ENCODE measurements at regions of chr17 and their contacts with region 1.

Region 1: DNA sequence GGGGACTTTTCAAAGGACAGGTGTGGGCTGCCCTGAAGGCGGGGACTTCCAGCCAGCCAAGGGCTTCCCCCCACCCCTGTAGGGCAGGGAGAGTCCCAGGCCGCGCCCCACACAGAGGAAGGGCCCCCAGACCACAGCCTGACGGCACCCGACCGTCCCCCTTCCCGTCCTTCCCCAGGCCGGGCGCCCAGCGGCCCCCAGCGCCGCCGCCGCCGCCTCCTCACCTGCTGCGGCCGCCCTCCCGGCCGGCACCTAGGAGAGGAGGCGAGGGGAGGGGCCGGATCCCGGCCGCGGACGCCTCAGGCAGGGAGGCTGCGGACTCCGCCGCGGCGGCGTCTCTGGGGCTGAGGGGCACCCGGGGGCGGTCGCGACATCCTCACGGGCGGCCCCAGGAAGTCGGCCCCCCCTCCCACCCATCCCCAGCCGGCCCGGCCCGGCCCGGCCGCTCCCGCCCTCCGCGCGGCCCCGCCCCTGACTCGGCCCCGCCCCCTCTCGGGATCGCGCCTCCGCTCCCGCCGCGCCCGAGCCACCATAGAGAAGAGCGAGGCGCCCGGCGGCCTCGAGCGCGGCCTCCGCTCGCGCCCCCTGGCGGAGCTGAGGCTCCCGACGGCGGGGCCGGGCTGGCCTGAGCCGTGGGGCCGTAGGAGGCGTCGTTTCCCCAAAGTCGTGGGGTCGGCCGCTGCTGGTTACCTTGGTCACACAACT is 25.5 kb upstream of the RFFL start:
- DNase-seq: peak; percentile 85 to 91
- ATAC-seq: peak; percentile 93 to 98 (median 96)
- H3K4me3 ChIP-seq: peak overlapping the region; percentile 76 to 99 (median 92)
- H3K27ac ChIP-seq: peak overlapping the region; percentile 33 to 95 (median 86)
- H3K4me1 ChIP-seq: peaks cover 0 to 27% (median 11%) of the 10 kb centered on the region in 9 donors
- H3K27me3 ChIP-seq: no peaks in the 10 kb centered on the region
- CTCF ChIP-seq: peak; percentile 72 to 92 (median 84)

Region 2: GRCh38 chr17:34980681-34981537 is 108.1 kb before region 1 on chr17:
- intact Hi-C with region 1: loop called in 2 of 10 experiments (anchors 5 kb)
- DNase-seq: peak; percentile 68 to 78
- ATAC-seq: peak; percentile 88 to 96 (median 94)
- H3K4me3 ChIP-seq: peak overlapping the region; percentile 94 to 99 (median 96)
- H3K27ac ChIP-seq: peak overlapping the region; percentile 98 to 100 (median 99)
- H3K4me1 ChIP-seq: peaks cover 0 to 33% (median 25%) of the 10 kb centered on the region in 9 donors
- H3K27me3 ChIP-seq: no peaks in the 10 kb centered on the region
- CTCF ChIP-seq: peak in 7 of 9 donors; percentile 12 to 64 (median 50)

Region 3: DNA sequence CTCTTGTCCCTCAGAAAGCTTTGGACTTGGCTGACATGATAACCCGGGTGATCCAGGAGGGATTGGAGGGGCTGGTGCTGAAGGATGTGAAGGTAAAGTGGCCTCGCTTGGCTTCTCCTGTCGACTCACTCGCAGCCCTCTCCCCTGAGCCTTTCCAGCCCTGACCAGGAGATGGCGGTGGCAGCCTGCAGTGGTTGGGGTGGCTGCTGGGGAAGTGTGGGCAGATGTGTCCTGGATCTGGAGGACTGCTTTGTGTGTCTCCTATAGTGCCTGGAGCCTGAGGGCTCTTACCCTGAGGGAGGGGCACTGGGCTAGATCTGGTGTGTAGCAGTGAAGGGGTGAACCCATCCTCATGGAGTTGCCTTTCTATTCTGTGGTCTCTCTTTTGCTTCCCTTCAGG is 90.8 kb before region 1 on chr17:
- intact Hi-C with region 1: loop called in 7 of 10 experiments (anchors 1 to 10 kb)
- DNase-seq: peak; percentile 59 to 66
- ATAC-seq: peak; percentile 70 to 87 (median 82)
- H3K4me3 ChIP-seq: no peak overlapping the region
- H3K27ac ChIP-seq: peak overlapping the region in 7 of 10 donors; percentile 50 to 77 (median 67)
- H3K4me1 ChIP-seq: peaks cover 9 to 36% (median 27%) of the 10 kb centered on the region in 9 donors
- H3K27me3 ChIP-seq: no peaks in the 10 kb centered on the region
- CTCF ChIP-seq: peak; percentile 61 to 85 (median 73)

Region 4: GRCh38 chr17:35154196-35155165 is 65.4 kb after region 1 on chr17:
- intact Hi-C with region 1: no loop called
- DNase-seq: no peak
- ATAC-seq: peak in 1 of 8 donors; percentile 9
- H3K4me3 ChIP-seq: no peak overlapping the region
- H3K27ac ChIP-seq: no peak overlapping the region
- H3K4me1 ChIP-seq: peaks cover 0 to 31% (median 2%) of the 10 kb centered on the region in 9 donors
- H3K27me3 ChIP-seq: no peaks in the 10 kb centered on the region
- CTCF ChIP-seq: no peak